GM10248 (cell line): ENCODE measurements at regions of chr15 and their contacts with region 1.

Region 1: GRCh38 chr15:66851226-66852071 is 149.4 kb downstream of the SMAD6 start:
- DNase-seq: peak; percentile 91
- CTCF ChIP-seq: peak; percentile 92

Region 2: GRCh38 chr15:66611257-66612053 is 240.0 kb before region 1 on chr15:
- CTCF ChIA-PET with region 1: interaction called, 47 read pairs
- POLR2A ChIA-PET with region 1: no interaction called
- DNase-seq: no peak
- CTCF ChIP-seq: no peak

Region 3: DNA sequence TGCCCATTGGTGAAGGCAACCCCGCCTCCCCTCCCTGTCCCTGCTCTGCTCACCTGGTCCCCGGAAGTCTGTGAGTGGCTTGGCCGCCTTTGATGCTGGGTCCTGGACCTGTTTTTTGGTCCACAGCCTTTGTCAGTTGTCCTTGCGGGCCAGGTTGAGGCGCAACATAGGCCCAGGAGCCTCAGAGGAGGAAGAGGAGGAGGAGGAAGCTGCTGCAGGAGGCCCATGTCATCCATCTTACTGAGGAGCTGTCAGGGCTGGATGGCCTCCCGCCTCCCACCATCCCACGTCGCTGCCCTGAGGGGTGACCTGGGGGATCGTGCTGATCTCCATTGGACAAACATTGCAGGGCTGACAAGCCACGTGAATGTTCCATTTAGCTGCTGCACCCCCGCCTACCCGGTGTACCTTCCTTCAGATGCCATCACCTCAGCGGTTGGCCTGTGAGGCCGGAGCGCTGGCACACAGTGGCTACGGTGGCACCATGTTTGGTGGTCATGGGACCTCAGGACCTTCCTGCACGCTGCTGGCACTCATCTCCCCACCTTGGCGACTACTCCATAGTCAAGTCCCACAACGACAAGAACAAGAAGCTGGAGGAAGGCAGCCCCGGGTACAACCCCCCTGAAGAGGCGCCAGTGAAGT is 43.1 kb before region 1 on chr15:
- CTCF ChIA-PET with region 1: interaction called, 10 read pairs
- POLR2A ChIA-PET with region 1: no interaction called
- DNase-seq: no peak
- CTCF ChIP-seq: no peak

Region 4: DNA sequence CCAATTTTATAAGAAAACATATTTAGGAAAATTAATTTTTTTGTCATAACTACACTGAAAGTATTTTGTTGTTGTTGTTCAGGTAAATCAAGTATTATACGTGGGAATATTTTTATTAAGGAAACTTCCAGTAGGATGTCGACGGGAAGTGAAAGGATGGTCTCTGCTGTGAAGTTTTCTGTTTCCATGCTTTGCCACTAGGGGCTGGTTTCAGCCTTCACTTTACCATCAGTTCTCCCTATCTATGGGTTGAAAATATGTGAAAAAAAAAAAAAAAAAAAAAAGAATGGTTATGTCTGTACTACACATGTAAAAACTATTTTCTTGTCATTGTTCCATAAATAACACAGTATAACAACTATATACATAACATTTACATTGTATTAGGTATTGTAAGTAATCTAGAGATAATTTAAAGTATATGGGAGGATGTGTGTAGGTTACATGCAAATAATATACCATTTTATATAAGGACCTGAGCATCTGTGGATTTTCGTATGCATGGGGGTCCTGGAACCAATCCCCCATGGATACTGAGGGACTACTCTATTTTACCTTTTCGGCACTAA is 12.7 kb before region 1 on chr15:
- CTCF ChIA-PET with region 1: interaction called, 14 read pairs
- POLR2A ChIA-PET with region 1: no interaction called
- DNase-seq: no peak
- CTCF ChIP-seq: no peak

Region 5: DNA sequence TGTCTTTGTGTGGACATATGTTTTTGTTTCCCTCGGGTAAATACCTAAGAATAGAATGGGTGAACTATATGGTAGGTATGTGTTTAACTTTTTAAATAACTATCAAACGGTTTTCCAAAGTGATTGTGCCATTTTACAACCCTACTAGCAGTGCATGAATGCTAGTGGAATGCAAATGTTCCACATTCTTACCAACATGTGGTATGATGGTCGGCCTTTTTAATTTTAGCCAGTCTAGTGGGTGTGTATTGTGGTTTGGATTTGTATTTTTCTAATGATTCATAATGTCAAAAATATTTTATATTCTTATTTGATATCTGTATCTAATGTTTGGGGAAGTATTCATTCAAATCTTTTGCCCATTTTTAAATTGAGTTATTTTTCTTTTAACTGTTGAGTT is 145.8 kb after region 1 on chr15:
- CTCF ChIA-PET with region 1: no interaction called
- POLR2A ChIA-PET with region 1: no interaction called
- DNase-seq: no peak
- CTCF ChIP-seq: no peak

Region 6: GRCh38 chr15:67109141-67110034 is 257.9 kb after region 1 on chr15:
- CTCF ChIA-PET with region 1: no interaction called
- POLR2A ChIA-PET with region 1: no interaction called
- DNase-seq: peak; percentile 69
- CTCF ChIP-seq: no peak